Thyroid gland (tissue), 4 donors: ENCODE measurements at regions of chr1 and their contacts with region 1.

Region 1: GRCh38 chr1:230073371-230074035 is 6.5 kb downstream of the GALNT2 start:
- DNase-seq: no peak
- H3K4me3 ChIP-seq: no peak overlapping the region
- H3K27ac ChIP-seq: no peak overlapping the region
- H3K4me1 ChIP-seq: peaks cover 38 to 56% of the 10 kb centered on the region in 2 donors
- H3K27me3 ChIP-seq: no peaks in the 10 kb centered on the region
- CTCF ChIP-seq: no peak
- POLR2A ChIP-seq: no peak

Region 2: DNA sequence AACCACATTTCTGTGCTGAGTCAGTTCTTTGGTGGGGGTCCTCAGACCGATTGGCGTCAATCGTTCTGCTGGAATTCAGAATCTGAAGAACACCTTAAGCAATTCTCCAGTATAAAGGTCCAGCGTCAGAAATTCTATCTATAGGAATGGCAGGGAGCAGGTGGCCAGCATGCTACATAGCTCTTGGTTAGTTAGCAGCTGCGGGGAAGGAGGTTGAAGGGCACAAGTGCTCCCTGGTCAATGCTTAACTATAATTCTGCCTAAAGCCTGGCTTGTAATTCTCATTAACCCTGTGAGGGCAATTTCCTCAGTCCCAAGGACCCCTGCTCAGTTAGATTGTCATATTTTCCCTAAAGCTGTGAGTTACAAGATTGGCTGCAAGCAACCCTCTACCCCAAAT is 60.8 kb before region 1 on chr1:
- intact Hi-C with region 1: no loop called
- DNase-seq: no peak
- H3K4me3 ChIP-seq: no peak overlapping the region
- H3K27ac ChIP-seq: no peak overlapping the region
- H3K4me1 ChIP-seq: no peaks in the 10 kb centered on the region
- H3K27me3 ChIP-seq: no peaks in the 10 kb centered on the region
- CTCF ChIP-seq: no peak
- POLR2A ChIP-seq: no peak

Region 3: DNA sequence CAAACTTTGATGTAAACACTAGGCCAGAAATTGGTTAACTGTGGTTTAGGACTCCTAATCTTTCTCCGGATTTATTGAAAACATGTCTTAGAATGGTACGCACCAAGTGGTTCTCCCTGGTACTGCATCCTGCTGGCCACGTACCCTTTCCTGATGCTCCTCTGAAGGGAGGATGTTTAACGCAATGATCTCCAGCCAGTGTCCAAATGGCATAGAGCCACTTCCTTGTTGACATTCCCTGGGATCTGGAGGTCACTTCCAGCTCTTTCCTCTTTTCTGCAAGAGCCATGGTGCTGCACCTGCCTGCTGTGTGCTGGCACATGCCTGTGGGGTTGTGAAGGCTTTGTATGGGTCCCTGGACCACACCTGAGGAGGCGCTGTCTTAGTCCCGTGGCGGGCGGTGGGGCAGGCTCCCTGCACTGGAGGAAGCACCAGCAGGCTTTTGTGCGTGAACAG is 47.5 kb after region 1 on chr1:
- intact Hi-C with region 1: loop called (anchors 10 kb)
- DNase-seq: no peak
- H3K4me3 ChIP-seq: no peak overlapping the region
- H3K27ac ChIP-seq: no peak overlapping the region
- H3K4me1 ChIP-seq: peaks cover 20 to 23% of the 10 kb centered on the region in 2 donors
- H3K27me3 ChIP-seq: no peaks in the 10 kb centered on the region
- CTCF ChIP-seq: peak; percentile 19 to 60 (median 42)
- POLR2A ChIP-seq: no peak